Activated CD8-positive, alpha-beta T cell treated with anti-CD3 and anti-CD28 coated beads, Interleukin-2, amount 10 ng/mL, durations not matched to agents 7 days and 5 days (primary cell): ENCODE measurements at regions of chr20 and their contacts with region 1.

Region 1: GRCh38 chr20:56411759-56412472 is at the start of gene CASS4:
- DNase-seq: peak; percentile 58
- ATAC-seq: peak; percentile 83
- H3K4me3 Mint-ChIP-seq: peak within 1 kb of the TSS; percentile 93
- H3K27ac Mint-ChIP-seq: peak within 1 kb of the TSS; percentile 97
- H3K4me1 Mint-ChIP-seq: peaks cover 56% of the 10 kb centered on the region
- H3K27me3 Mint-ChIP-seq: no peaks in the 10 kb centered on the region
- total RNA-seq, gene CASS4: 17.8 to 18.8 TPM

Region 2: DNA sequence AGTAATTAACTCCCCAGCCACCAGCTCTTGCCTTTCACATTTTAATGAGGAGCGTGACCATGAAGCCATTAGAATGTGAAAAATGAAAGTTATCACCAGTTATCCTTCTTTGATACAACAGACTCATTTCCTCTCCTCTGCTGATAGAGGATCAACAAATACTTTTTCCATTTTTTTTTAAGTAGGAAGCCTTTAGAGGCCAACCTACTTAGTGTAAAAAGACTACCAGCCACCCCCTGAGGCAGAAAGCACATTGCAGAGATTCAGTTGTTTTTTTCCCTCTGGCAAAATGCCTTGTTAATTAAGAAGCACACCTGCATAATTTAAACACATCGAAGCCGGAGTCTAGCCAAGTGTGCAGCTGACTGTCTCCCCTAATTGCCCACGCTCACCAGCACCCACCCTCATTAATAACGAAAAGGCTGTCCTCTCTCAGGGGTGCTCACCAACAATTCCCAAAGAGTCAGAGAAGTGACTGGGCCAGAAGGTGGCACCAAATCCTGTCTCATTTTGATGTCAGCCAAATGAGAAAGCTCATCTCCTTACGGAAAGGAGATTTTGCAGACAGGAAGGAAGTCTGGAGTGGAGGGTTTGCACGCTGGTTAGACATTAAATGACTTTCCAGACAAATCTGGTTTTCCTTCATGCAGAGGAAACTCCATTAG is 224.2 kb before region 1 on chr20:
- CTCF ChIA-PET with region 1: no interaction called
- POLR2A ChIA-PET with region 1: no interaction called
- DNase-seq: no peak
- ATAC-seq: no peak
- H3K4me3 Mint-ChIP-seq: no peak overlapping the region
- H3K27ac Mint-ChIP-seq: no peak overlapping the region
- H3K4me1 Mint-ChIP-seq: no peaks in the 10 kb centered on the region
- H3K27me3 Mint-ChIP-seq: no peaks in the 10 kb centered on the region

Region 3: GRCh38 chr20:56247948-56248782 is 163.8 kb before region 1 on chr20 and contains the start of gene MC3R:
- CTCF ChIA-PET with region 1: no interaction called
- POLR2A ChIA-PET with region 1: no interaction called
- DNase-seq: peak; percentile 58
- ATAC-seq: peak; percentile 61
- H3K4me3 Mint-ChIP-seq: no peak within 1 kb of the TSS
- H3K27ac Mint-ChIP-seq: no peak within 1 kb of the TSS
- H3K4me1 Mint-ChIP-seq: no peaks in the 10 kb centered on the region
- H3K27me3 Mint-ChIP-seq: peaks cover 8% of the 10 kb centered on the region
- total RNA-seq, gene MC3R: not detected

Region 4: GRCh38 chr20:56392282-56393137 is 19.4 kb before region 1 on chr20 and contains the start of gene CSTF1:
- CTCF ChIA-PET with region 1: interaction called, 59 read pairs
- POLR2A ChIA-PET with region 1: interaction called, 36 read pairs
- DNase-seq: peak; percentile 99
- ATAC-seq: peak; percentile 95
- H3K4me3 Mint-ChIP-seq: no peak within 1 kb of the TSS
- H3K27ac Mint-ChIP-seq: no peak within 1 kb of the TSS
- H3K4me1 Mint-ChIP-seq: peaks cover 58% of the 10 kb centered on the region
- H3K27me3 Mint-ChIP-seq: no peaks in the 10 kb centered on the region
- total RNA-seq, gene CSTF1: 60.5 to 66.3 TPM

Region 5: DNA sequence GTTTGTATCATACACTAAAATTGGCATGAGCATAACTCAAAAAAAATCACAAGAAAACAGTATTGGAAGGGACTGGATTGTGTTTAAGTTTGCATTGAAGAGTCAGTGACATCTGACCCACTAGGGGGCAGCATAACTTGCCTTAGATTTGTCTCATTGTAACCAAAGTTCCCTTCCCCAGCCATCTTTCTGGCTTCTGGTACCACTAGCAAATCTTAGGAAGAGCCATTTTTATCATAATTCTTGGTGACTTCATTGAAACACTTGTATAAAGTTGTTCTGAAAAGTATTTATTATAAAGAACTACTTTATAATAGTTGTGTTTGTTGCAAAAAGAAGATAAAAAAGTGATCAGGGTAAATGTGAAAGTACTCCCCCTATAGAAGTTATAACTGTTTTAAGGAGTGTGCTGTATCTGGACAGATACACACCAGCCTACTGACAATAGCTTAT is 11.8 kb before region 1 on chr20:
- CTCF ChIA-PET with region 1: interaction called, 59 read pairs
- POLR2A ChIA-PET with region 1: interaction called, 4 read pairs
- DNase-seq: peak; percentile 83
- ATAC-seq: peak; percentile 87
- H3K4me3 Mint-ChIP-seq: no peak overlapping the region
- H3K27ac Mint-ChIP-seq: no peak overlapping the region
- H3K4me1 Mint-ChIP-seq: peaks cover 41% of the 10 kb centered on the region
- H3K27me3 Mint-ChIP-seq: no peaks in the 10 kb centered on the region

Region 6: GRCh38 chr20:56422076-56422823 is 10.3 kb after region 1 on chr20:
- CTCF ChIA-PET with region 1: interaction called, 29 read pairs
- POLR2A ChIA-PET with region 1: interaction called, 11 read pairs
- DNase-seq: peak; percentile 19
- ATAC-seq: no peak
- H3K4me3 Mint-ChIP-seq: peak overlapping the region; percentile 38
- H3K27ac Mint-ChIP-seq: peak overlapping the region; percentile 77
- H3K4me1 Mint-ChIP-seq: peaks cover 70% of the 10 kb centered on the region
- H3K27me3 Mint-ChIP-seq: no peaks in the 10 kb centered on the region

Region 7: GRCh38 chr20:56439771-56440291 is 27.9 kb after region 1 on chr20:
- CTCF ChIA-PET with region 1: interaction called, 10 read pairs
- POLR2A ChIA-PET with region 1: interaction called, 10 read pairs
- DNase-seq: peak; percentile 43
- ATAC-seq: peak; percentile 42
- H3K4me3 Mint-ChIP-seq: peak overlapping the region; percentile 42
- H3K27ac Mint-ChIP-seq: peak overlapping the region; percentile 88
- H3K4me1 Mint-ChIP-seq: peaks cover 62% of the 10 kb centered on the region
- H3K27me3 Mint-ChIP-seq: no peaks in the 10 kb centered on the region

Region 8: DNA sequence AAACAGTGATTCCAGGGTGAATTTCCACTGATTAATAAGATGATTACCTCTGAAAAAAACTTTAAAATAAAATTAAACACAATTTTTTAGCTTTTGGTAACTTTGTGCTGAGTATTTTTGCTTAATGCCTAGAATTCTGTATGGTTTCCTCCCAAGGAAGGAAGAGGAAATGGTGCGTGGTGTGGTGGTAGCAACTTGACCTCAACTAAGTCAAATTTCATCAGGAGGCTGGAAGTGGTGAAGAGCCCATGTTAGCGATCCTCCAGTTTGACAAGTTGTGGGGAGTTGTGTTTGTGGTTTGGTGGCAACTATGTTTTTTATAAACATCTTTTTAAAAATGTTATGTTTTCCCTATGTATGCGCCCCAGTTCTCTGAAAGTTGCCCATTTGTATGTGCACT is 51.5 kb after region 1 on chr20:
- CTCF ChIA-PET with region 1: interaction called, 15 read pairs
- POLR2A ChIA-PET with region 1: interaction called, 16 read pairs
- DNase-seq: peak; percentile 72
- ATAC-seq: peak; percentile 13
- H3K4me3 Mint-ChIP-seq: peak overlapping the region; percentile 64
- H3K27ac Mint-ChIP-seq: peak overlapping the region; percentile 82
- H3K4me1 Mint-ChIP-seq: peaks cover 78% of the 10 kb centered on the region
- H3K27me3 Mint-ChIP-seq: no peaks in the 10 kb centered on the region

Region 9: GRCh38 chr20:56468316-56469082 is 56.6 kb after region 1 on chr20 and contains the start of gene RTF2:
- CTCF ChIA-PET with region 1: interaction called, 15 read pairs
- POLR2A ChIA-PET with region 1: interaction called, 16 read pairs
- DNase-seq: peak; percentile 96
- ATAC-seq: peak; percentile 93
- H3K4me3 Mint-ChIP-seq: peak within 1 kb of the TSS; percentile 100
- H3K27ac Mint-ChIP-seq: peak within 1 kb of the TSS; percentile 100
- H3K4me1 Mint-ChIP-seq: peaks cover 65% of the 10 kb centered on the region
- H3K27me3 Mint-ChIP-seq: no peaks in the 10 kb centered on the region
- total RNA-seq, gene RTF2: 118 to 125 TPM

Region 10: GRCh38 chr20:56497326-56497725 is 85.4 kb after region 1 on chr20:
- CTCF ChIA-PET with region 1: no interaction called
- POLR2A ChIA-PET with region 1: no interaction called
- DNase-seq: no peak
- ATAC-seq: no peak
- H3K4me3 Mint-ChIP-seq: no peak overlapping the region
- H3K27ac Mint-ChIP-seq: no peak overlapping the region
- H3K4me1 Mint-ChIP-seq: no peaks in the 10 kb centered on the region
- H3K27me3 Mint-ChIP-seq: no peaks in the 10 kb centered on the region

Region 11: DNA sequence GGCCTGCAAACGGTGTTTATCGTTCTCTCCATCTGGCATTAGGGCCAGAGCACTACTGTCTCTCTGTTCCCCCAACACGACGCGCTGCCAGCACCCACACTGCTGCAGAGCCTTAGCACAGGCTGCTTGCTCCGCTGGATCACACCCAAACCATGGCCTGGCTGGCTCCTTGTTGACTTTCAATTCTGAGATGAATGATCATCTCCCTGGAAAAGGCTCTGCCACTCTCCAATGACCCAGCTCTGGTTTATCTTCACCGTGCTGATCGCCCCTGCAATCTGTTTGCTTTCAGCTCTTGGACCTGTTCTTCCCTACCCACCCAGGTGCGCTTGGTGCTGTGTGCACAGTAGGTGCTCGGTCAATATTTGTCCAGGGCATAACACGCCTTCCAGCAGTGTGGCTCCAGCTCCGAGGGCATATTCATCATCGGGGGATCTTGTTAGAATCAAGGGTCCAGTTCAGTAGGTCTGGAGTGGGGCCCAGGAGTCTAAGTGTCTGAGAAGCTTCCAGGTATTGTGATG is 323.3 kb after region 1 on chr20:
- CTCF ChIA-PET with region 1: no interaction called
- POLR2A ChIA-PET with region 1: no interaction called
- DNase-seq: no peak
- ATAC-seq: no peak
- H3K4me3 Mint-ChIP-seq: no peak overlapping the region
- H3K27ac Mint-ChIP-seq: no peak overlapping the region
- H3K4me1 Mint-ChIP-seq: no peaks in the 10 kb centered on the region
- H3K27me3 Mint-ChIP-seq: peaks cover 26% of the 10 kb centered on the region